ENCODE measurements at regions of chr2 and their contacts with region 1.

Region 1: GRCh38 chr2:239401067-239401880 is 454 bp upstream of the HDAC4 start:
- DNase-seq: peak; percentile 98
- ATAC-seq: peak; percentile 87
- H3K4me3 Mint-ChIP-seq: peak overlapping the region; percentile 92
- H3K27ac Mint-ChIP-seq: peak overlapping the region; percentile 98
- H3K4me1 Mint-ChIP-seq: peaks cover 31% of the 10 kb centered on the region
- H3K27me3 Mint-ChIP-seq: no peaks in the 10 kb centered on the region
- CTCF ChIP-seq: no peak

Region 2: GRCh38 chr2:239143858-239144718 is 257.2 kb before region 1 on chr2:
- CTCF ChIA-PET with region 1: interaction called, 9 read pairs
- POLR2A ChIA-PET with region 1: no interaction called
- intact Hi-C with region 1: loop called (anchors 1 kb)
- DNase-seq: no peak
- ATAC-seq: peak; percentile 52
- H3K4me3 Mint-ChIP-seq: no peak overlapping the region
- H3K27ac Mint-ChIP-seq: no peak overlapping the region
- H3K4me1 Mint-ChIP-seq: no peaks in the 10 kb centered on the region
- H3K27me3 Mint-ChIP-seq: no peaks in the 10 kb centered on the region
- CTCF ChIP-seq: no peak

Region 3: GRCh38 chr2:239293775-239294430 is 107.4 kb before region 1 on chr2:
- CTCF ChIA-PET with region 1: no interaction called
- POLR2A ChIA-PET with region 1: interaction called, 10 read pairs
- intact Hi-C with region 1: loop called (anchors 1 kb)
- DNase-seq: no peak
- ATAC-seq: peak; percentile 85
- H3K4me3 Mint-ChIP-seq: peak overlapping the region; percentile 28
- H3K27ac Mint-ChIP-seq: no peak overlapping the region
- H3K4me1 Mint-ChIP-seq: peaks cover 71% of the 10 kb centered on the region
- H3K27me3 Mint-ChIP-seq: peaks cover 4% of the 10 kb centered on the region
- CTCF ChIP-seq: no peak

Region 4: GRCh38 chr2:239369631-239370161 is 31.6 kb before region 1 on chr2:
- CTCF ChIA-PET with region 1: interaction called, 3 read pairs
- POLR2A ChIA-PET with region 1: interaction called, 58 read pairs
- intact Hi-C with region 1: loop called (anchors 1 kb)
- DNase-seq: peak; percentile 65
- ATAC-seq: peak; percentile 91
- H3K4me3 Mint-ChIP-seq: peak overlapping the region; percentile 74
- H3K27ac Mint-ChIP-seq: peak overlapping the region; percentile 89
- H3K4me1 Mint-ChIP-seq: peaks cover 8% of the 10 kb centered on the region
- H3K27me3 Mint-ChIP-seq: no peaks in the 10 kb centered on the region
- CTCF ChIP-seq: no peak

Region 5: GRCh38 chr2:239791526-239792404 is 390.5 kb after region 1 on chr2:
- CTCF ChIA-PET with region 1: no interaction called
- POLR2A ChIA-PET with region 1: no interaction called
- intact Hi-C with region 1: no loop called
- DNase-seq: no peak
- ATAC-seq: no peak
- H3K4me3 Mint-ChIP-seq: no peak overlapping the region
- H3K27ac Mint-ChIP-seq: no peak overlapping the region
- H3K4me1 Mint-ChIP-seq: no peaks in the 10 kb centered on the region
- H3K27me3 Mint-ChIP-seq: no peaks in the 10 kb centered on the region
- CTCF ChIP-seq: no peak

Region 6: GRCh38 chr2:240021488-240022104 is 620.3 kb after region 1 on chr2:
- CTCF ChIA-PET with region 1: no interaction called
- POLR2A ChIA-PET with region 1: interaction called, 9 read pairs
- intact Hi-C with region 1: loop called (anchors 1 kb)
- DNase-seq: peak; percentile 50
- ATAC-seq: peak; percentile 23
- H3K4me3 Mint-ChIP-seq: no peak overlapping the region
- H3K27ac Mint-ChIP-seq: no peak overlapping the region
- H3K4me1 Mint-ChIP-seq: peaks cover 16% of the 10 kb centered on the region
- H3K27me3 Mint-ChIP-seq: no peaks in the 10 kb centered on the region
- CTCF ChIP-seq: no peak

Region 7: DNA sequence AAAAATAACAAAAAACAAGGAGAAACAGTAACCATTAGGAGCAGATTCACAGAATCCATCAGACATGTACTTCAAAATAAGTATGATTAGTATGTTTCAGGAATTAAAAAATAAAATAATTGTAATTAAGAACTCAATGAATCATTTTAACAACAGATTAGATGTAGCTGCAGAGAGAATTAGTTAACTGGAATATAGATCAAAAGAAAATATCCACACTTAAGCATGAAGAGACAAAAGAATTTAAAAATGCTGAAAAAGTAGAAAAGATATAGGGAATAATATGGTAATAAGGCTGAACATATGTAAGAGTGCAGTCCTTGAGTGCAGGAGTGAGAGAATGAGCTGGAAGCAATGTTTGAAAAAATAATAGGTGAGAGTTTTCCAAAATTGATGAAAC is 676.2 kb after region 1 on chr2:
- CTCF ChIA-PET with region 1: no interaction called
- POLR2A ChIA-PET with region 1: no interaction called
- intact Hi-C with region 1: no loop called
- DNase-seq: no peak
- ATAC-seq: no peak
- H3K4me3 Mint-ChIP-seq: no peak overlapping the region
- H3K27ac Mint-ChIP-seq: no peak overlapping the region
- H3K4me1 Mint-ChIP-seq: no peaks in the 10 kb centered on the region
- H3K27me3 Mint-ChIP-seq: peaks cover 8% of the 10 kb centered on the region
- CTCF ChIP-seq: no peak

Region 8: GRCh38 chr2:240434728-240435456 is 1033.6 kb after region 1 on chr2:
- CTCF ChIA-PET with region 1: no interaction called
- POLR2A ChIA-PET with region 1: no interaction called
- intact Hi-C with region 1: loop called (anchors 2 kb)
- DNase-seq: peak; percentile 94
- ATAC-seq: peak; percentile 90
- H3K4me3 Mint-ChIP-seq: peak overlapping the region; percentile 85
- H3K27ac Mint-ChIP-seq: peak overlapping the region; percentile 46
- H3K4me1 Mint-ChIP-seq: peaks cover 11% of the 10 kb centered on the region
- H3K27me3 Mint-ChIP-seq: peaks cover 11% of the 10 kb centered on the region
- CTCF ChIP-seq: no peak